Dendritic cell treated with granulocyte-macrophage colony-stimulating factor and Interleukin-4, amounts not matched to agents 40 ng/mL and 50 ng/mL, for 4 days (primary cell): ENCODE measurements at regions of chr1 and their contacts with region 1.

Region 1: GRCh38 chr1:41268154-41268770 is 26.2 kb upstream of the SCMH1 start:
- H3K4me3 Mint-ChIP-seq: no peak overlapping the region
- H3K27ac Mint-ChIP-seq: no peak overlapping the region
- H3K4me1 Mint-ChIP-seq: no peaks in the 10 kb centered on the region
- H3K27me3 Mint-ChIP-seq: peaks cover 7% of the 10 kb centered on the region

Region 2: GRCh38 chr1:41222496-41222895 is 45.8 kb before region 1 on chr1:
- intact Hi-C with region 1: no loop called
- H3K4me3 Mint-ChIP-seq: no peak overlapping the region
- H3K27ac Mint-ChIP-seq: no peak overlapping the region
- H3K4me1 Mint-ChIP-seq: peaks cover 12% of the 10 kb centered on the region
- H3K27me3 Mint-ChIP-seq: no peaks in the 10 kb centered on the region

Region 3: GRCh38 chr1:41416552-41417334 is 148.5 kb after region 1 on chr1:
- intact Hi-C with region 1: loop called (anchors 1 kb)
- H3K4me3 Mint-ChIP-seq: no peak overlapping the region
- H3K27ac Mint-ChIP-seq: no peak overlapping the region
- H3K4me1 Mint-ChIP-seq: peaks cover 11% of the 10 kb centered on the region
- H3K27me3 Mint-ChIP-seq: peaks cover 16% of the 10 kb centered on the region

Region 4: GRCh38 chr1:41432481-41433280 is 164.4 kb after region 1 on chr1:
- intact Hi-C with region 1: loop called (anchors 1 kb)
- H3K4me3 Mint-ChIP-seq: no peak overlapping the region
- H3K27ac Mint-ChIP-seq: no peak overlapping the region
- H3K4me1 Mint-ChIP-seq: peaks cover 36% of the 10 kb centered on the region
- H3K27me3 Mint-ChIP-seq: peaks cover 32% of the 10 kb centered on the region